Activated CD4-positive, alpha-beta memory T cell treated with anti-CD3 and anti-CD28 coated beads, Interleukin-2, amount 10 ng/mL, durations not matched to agents 7 days and 5 days (primary cell): ENCODE measurements at regions of chr1 and their contacts with region 1.

Region 1: GRCh38 chr1:110619412-110620249 is 13.5 kb upstream of the KCNA2 start:
- DNase-seq: peak; percentile 93
- H3K4me3 Mint-ChIP-seq: peak overlapping the region; percentile 74
- H3K27ac Mint-ChIP-seq: peak overlapping the region; percentile 83
- H3K4me1 Mint-ChIP-seq: peaks cover 60% of the 10 kb centered on the region
- H3K27me3 Mint-ChIP-seq: no peaks in the 10 kb centered on the region

Region 2: DNA sequence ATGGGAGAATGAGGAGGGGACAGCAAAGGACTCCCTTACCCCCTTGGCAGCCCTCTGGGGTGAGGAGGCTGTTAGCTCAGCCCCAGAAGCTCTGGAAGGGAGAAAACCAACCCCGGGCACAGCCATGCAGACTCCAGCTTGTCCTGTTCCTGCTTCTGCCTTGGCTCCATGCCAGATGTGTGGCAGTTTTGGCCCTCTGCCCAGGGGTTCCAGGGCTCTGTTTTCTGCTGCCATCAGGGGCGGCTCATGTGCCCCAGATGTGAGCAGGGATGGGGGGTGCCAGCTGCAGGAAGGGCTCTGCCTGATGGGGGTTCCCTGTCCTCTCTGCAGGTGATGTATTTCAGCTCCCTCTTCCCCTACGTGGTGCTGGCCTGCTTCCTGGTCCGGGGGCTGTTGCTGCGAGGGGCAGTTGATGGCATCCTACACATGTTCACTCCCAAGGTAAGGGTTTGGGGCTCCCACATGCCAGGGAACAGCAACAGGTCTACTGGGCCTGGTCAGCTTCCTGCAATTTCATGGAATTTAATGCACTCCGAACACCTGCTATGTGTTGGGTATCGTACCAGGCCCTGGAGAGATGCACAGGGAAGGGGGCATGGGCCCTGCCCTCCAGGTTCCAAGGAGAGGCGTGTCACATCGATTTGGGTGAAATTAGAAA is 443.2 kb before region 1 on chr1:
- CTCF ChIA-PET with region 1: no interaction called
- POLR2A ChIA-PET with region 1: no interaction called
- DNase-seq: no peak
- H3K4me3 Mint-ChIP-seq: no peak overlapping the region
- H3K27ac Mint-ChIP-seq: no peak overlapping the region
- H3K4me1 Mint-ChIP-seq: no peaks in the 10 kb centered on the region
- H3K27me3 Mint-ChIP-seq: peaks cover 14% of the 10 kb centered on the region

Region 3: GRCh38 chr1:110554871-110555801 is 64.5 kb before region 1 on chr1:
- CTCF ChIA-PET with region 1: interaction called, 18 read pairs
- POLR2A ChIA-PET with region 1: interaction called, 3 read pairs
- DNase-seq: peak; percentile 54
- H3K4me3 Mint-ChIP-seq: no peak overlapping the region
- H3K27ac Mint-ChIP-seq: no peak overlapping the region
- H3K4me1 Mint-ChIP-seq: peaks cover 12% of the 10 kb centered on the region
- H3K27me3 Mint-ChIP-seq: peaks cover 62% of the 10 kb centered on the region

Region 4: GRCh38 chr1:110570307-110570706 is 49.3 kb before region 1 on chr1:
- CTCF ChIA-PET with region 1: no interaction called
- POLR2A ChIA-PET with region 1: no interaction called
- DNase-seq: no peak
- H3K4me3 Mint-ChIP-seq: no peak overlapping the region
- H3K27ac Mint-ChIP-seq: no peak overlapping the region
- H3K4me1 Mint-ChIP-seq: no peaks in the 10 kb centered on the region
- H3K27me3 Mint-ChIP-seq: peaks cover 51% of the 10 kb centered on the region

Region 5: GRCh38 chr1:110639724-110640386 is 20.2 kb after region 1 on chr1:
- CTCF ChIA-PET with region 1: interaction called, 56 read pairs
- POLR2A ChIA-PET with region 1: interaction called, 52 read pairs
- DNase-seq: no peak
- H3K4me3 Mint-ChIP-seq: no peak overlapping the region
- H3K27ac Mint-ChIP-seq: peak overlapping the region; percentile 24
- H3K4me1 Mint-ChIP-seq: peaks cover 94% of the 10 kb centered on the region
- H3K27me3 Mint-ChIP-seq: no peaks in the 10 kb centered on the region

Region 6: DNA sequence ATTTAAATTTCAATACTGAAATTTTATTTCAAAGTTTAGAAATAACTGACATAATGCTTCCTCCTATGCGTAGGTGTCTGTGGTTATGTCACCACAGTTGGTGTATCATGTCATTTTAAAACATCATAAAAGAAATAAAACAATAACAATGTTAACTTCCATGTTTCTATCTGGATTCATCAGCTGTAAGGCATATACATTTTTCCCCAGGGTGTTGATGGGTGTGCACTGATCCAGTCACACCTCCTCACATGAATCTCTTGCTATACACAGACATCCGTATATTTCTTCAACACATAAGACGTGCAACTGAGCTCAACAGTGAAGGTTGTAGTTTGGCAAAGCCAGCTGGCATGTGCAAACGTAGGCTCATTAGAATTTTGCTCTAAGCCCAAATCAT is 48.9 kb after region 1 on chr1:
- CTCF ChIA-PET with region 1: interaction called, 40 read pairs
- POLR2A ChIA-PET with region 1: interaction called, 92 read pairs
- DNase-seq: peak; percentile 25
- H3K4me3 Mint-ChIP-seq: peak overlapping the region; percentile 73
- H3K27ac Mint-ChIP-seq: peak overlapping the region; percentile 79
- H3K4me1 Mint-ChIP-seq: peaks cover 12% of the 10 kb centered on the region
- H3K27me3 Mint-ChIP-seq: no peaks in the 10 kb centered on the region

Region 7: GRCh38 chr1:110760321-110760720 is 140.7 kb after region 1 on chr1:
- CTCF ChIA-PET with region 1: interaction called, 158 read pairs
- POLR2A ChIA-PET with region 1: interaction called, 66 read pairs
- DNase-seq: no peak
- H3K4me3 Mint-ChIP-seq: no peak overlapping the region
- H3K27ac Mint-ChIP-seq: no peak overlapping the region
- H3K4me1 Mint-ChIP-seq: peaks cover 2% of the 10 kb centered on the region
- H3K27me3 Mint-ChIP-seq: peaks cover 27% of the 10 kb centered on the region

Region 8: GRCh38 chr1:110787328-110788071 is 167.9 kb after region 1 on chr1:
- CTCF ChIA-PET with region 1: interaction called, 135 read pairs
- POLR2A ChIA-PET with region 1: interaction called, 31 read pairs
- DNase-seq: peak; percentile 73
- H3K4me3 Mint-ChIP-seq: peak overlapping the region; percentile 57
- H3K27ac Mint-ChIP-seq: peak overlapping the region; percentile 93
- H3K4me1 Mint-ChIP-seq: peaks cover 62% of the 10 kb centered on the region
- H3K27me3 Mint-ChIP-seq: peaks cover 3% of the 10 kb centered on the region